Ascending aorta (tissue), 2 donors: ENCODE measurements at regions of chr7 and their contacts with region 1.

Region 1: DNA sequence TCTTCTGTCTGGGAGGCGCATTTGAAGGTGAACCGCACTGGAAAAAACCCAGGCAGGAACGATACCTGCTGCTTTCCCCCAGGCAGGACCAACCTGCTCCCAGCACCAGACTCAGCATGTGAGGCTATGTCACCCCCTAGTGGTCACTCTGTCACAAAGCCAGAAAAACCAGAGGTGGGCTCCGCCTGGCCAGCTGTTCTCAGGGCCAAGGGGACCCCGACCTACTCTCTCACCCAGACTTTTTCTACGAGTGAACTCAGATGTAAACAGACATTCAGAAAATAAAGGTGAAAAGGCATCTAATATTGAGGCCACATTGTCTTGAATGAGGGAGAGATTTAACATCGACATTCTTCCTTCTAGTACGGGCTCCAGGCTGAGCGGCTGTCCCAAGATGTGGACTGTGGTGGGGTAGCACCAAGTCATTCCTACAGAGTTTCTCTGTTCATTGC is 117.3 kb downstream of the PRKAG2 start:
- DNase-seq: peak in 1 of 2 donors; percentile 79
- H3K4me3 ChIP-seq: no peak overlapping the region
- H3K27ac ChIP-seq: no peak overlapping the region
- H3K4me1 ChIP-seq: peaks cover 8 to 46% of the 10 kb centered on the region in 2 donors
- H3K27me3 ChIP-seq: no peaks in the 10 kb centered on the region
- CTCF ChIP-seq: peak; percentile 81 to 92 (median 86)

Region 2: DNA sequence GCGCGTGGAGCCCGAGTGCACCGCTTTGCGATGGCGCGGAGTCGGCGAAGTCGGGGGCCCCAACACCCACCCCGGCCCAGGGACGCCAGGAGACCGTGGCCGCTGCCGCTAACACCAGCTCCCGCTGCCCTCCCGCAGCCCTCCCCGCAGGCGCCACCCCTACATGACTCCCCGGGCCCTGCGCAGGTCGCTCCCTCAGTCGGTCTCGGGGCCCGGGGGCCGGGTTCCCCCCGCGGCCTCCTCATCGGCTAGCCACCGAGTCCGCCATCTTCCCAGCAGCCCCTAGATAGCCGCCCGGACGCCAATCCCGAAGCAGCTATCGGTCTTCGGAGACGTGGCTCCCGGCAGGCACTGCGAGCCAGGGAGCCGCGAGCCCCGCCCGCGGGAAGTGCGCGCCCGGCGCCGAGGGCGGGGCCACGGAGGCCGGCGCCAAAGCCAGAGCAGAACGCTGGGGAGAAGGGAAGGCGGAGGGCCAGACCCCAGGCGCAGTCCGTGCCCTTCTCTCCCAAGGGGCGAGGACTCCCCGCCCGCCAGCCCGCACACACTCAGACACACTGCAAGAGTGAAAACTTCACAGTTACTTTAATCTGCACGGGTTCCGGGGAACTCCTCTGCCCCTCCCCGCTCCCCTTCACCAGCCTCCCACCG is 679.0 kb before region 1 on chr7 and contains the start of gene FASTK:
- intact Hi-C with region 1: loop called (anchors 10 kb)
- DNase-seq: peak; percentile 84 to 95
- H3K4me3 ChIP-seq: peak within 1 kb of the TSS; percentile 75 to 87
- H3K27ac ChIP-seq: peak within 1 kb of the TSS; percentile 95 to 96
- H3K4me1 ChIP-seq: peaks cover 24 to 35% of the 10 kb centered on the region in 2 donors
- H3K27me3 ChIP-seq: no peaks in the 10 kb centered on the region
- CTCF ChIP-seq: no peak
- total RNA-seq, gene FASTK: 121 TPM

Region 3: DNA sequence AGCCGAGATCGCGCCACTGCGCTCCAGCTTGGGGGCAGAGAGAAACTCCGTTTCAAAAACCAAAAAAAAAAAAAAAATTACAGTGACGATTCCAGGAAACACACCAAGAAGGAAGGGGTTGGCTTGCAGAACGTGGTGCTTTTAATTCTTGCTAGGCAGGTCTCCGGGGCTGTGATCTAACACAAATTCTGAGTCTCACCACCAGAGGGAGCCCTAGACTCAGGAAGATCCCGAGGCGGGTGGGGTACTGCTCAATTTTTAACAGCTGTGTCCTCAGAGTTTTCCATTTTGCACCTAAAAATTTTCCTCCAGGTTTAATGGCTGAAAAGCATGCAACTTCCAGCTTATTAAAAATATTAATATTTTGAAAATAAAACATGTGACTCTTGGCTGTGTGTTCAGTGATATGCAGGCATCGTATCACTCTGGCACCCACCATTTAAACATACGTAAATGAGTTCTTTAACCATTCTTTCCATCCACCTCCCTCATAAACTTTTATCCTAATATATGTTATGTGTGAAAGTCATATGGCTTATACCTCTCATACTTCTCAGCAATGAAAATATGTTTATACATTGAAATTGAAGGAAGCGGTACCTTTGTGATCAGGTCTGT is 444.5 kb before region 1 on chr7:
- intact Hi-C with region 1: loop called (anchors 5 kb)
- DNase-seq: peak in 1 of 2 donors; percentile 88
- H3K4me3 ChIP-seq: no peak overlapping the region
- H3K27ac ChIP-seq: no peak overlapping the region
- H3K4me1 ChIP-seq: peaks cover 3 to 12% of the 10 kb centered on the region in 2 donors
- H3K27me3 ChIP-seq: no peaks in the 10 kb centered on the region
- CTCF ChIP-seq: peak; percentile 69 to 84 (median 77)

Region 4: DNA sequence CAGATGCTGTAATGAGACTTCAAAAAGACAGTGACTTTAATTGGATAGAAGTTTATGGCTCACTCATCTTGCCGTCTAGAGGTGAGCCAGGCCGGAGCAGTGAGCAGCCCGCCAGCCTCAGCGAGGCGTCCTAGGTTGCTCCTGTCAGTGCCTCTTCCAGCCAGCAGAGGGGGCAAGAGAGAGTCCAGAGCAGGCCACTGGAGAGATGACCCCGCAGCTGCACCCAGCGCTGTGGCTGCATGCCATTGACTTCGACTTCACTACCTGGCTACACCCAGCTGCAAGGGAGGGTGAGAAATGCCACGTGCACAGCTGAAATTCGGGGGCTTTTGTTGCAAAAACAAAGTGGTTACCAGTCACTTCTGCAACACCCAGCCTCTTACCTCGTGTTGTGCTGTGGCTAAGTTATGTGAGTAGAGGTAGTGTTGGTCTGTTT is 391.5 kb before region 1 on chr7:
- intact Hi-C with region 1: loop called (anchors 2 kb)
- DNase-seq: peak in 1 of 2 donors; percentile 90
- H3K4me3 ChIP-seq: no peak overlapping the region
- H3K27ac ChIP-seq: no peak overlapping the region
- H3K4me1 ChIP-seq: peaks cover 6 to 37% of the 10 kb centered on the region in 2 donors
- H3K27me3 ChIP-seq: no peaks in the 10 kb centered on the region
- CTCF ChIP-seq: peak; percentile 90 to 97 (median 92)

Region 5: DNA sequence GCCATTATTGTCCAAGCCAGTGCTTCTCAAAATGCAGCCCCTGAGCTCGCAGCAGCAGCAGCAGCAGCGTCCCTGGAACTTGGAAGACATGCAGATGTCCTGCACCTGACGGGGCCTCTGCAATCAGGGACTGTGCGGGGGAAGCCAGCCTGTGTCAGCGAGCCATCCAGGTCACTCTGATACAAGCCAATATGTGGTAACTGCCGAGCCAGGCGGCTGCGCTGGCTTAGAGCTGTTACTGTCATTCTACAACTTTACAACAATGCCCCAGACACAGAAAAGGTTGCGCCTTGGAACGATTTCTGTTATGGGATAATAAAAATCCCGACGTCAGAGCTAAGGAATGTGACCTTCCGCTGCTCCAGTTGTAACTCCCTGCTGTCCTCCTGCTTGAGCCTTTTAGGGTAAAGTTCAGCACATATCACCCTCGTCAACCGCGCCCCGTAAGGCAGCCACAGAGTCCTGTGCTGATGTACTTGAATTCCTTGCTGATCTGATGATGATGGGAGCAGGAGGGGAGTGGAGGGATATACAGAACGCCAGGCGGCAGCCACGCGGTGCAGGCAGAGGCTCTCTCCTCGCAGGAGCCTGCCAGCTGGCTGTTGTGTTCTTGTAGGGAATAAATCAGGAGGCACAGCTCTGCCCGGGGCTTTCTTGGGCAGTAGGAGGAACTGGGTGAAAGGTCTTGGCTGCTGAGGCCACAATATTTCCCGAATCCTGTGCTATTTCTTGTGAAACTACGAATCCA is 299.7 kb before region 1 on chr7:
- intact Hi-C with region 1: loop called (anchors 10 kb)
- DNase-seq: peak; percentile 52 to 95
- H3K4me3 ChIP-seq: peak overlapping the region; percentile 7 to 52
- H3K27ac ChIP-seq: peak overlapping the region; percentile 87 to 93
- H3K4me1 ChIP-seq: peaks cover 7 to 22% of the 10 kb centered on the region in 2 donors
- H3K27me3 ChIP-seq: no peaks in the 10 kb centered on the region
- CTCF ChIP-seq: peak; percentile 29 to 47 (median 35)

Region 6: GRCh38 chr7:151570366-151570915 is 189.2 kb before region 1 on chr7:
- intact Hi-C with region 1: loop called (anchors 1 kb)
- DNase-seq: no peak
- H3K4me3 ChIP-seq: no peak overlapping the region
- H3K27ac ChIP-seq: no peak overlapping the region
- H3K4me1 ChIP-seq: no peaks in the 10 kb centered on the region
- H3K27me3 ChIP-seq: no peaks in the 10 kb centered on the region
- CTCF ChIP-seq: peak; percentile 29 to 47 (median 30)

Region 7: GRCh38 chr7:151626422-151627115 is 133.0 kb before region 1 on chr7:
- intact Hi-C with region 1: loop called (anchors 1 kb)
- DNase-seq: peak in 1 of 2 donors; percentile 63
- H3K4me3 ChIP-seq: no peak overlapping the region
- H3K27ac ChIP-seq: no peak overlapping the region
- H3K4me1 ChIP-seq: peaks cover 12 to 40% of the 10 kb centered on the region in 2 donors
- H3K27me3 ChIP-seq: no peaks in the 10 kb centered on the region
- CTCF ChIP-seq: peak; percentile 14 to 60 (median 50)